Testis (tissue), 5 donors: ENCODE measurements at regions of chr12 and their contacts with region 1.

Region 1: GRCh38 chr12:46473634-46474329 is 101.2 kb upstream of the SLC38A2 start:
- DNase-seq: peak; percentile 59
- H3K4me3 ChIP-seq: no peak overlapping the region
- H3K27ac ChIP-seq: peak overlapping the region; percentile 55 to 70
- H3K4me1 ChIP-seq: peaks cover 14% of the 10 kb centered on the region
- H3K27me3 ChIP-seq: no peaks in the 10 kb centered on the region
- CTCF ChIP-seq: no peak
- POLR2A ChIP-seq: no peak

Region 2: GRCh38 chr12:46382964-46383653 is 90.7 kb before region 1 on chr12:
- intact Hi-C with region 1: loop called (anchors 10 kb)
- DNase-seq: peak; percentile 96
- H3K4me3 ChIP-seq: peak overlapping the region; percentile 76 to 86
- H3K27ac ChIP-seq: peak overlapping the region; percentile 98 to 99
- H3K4me1 ChIP-seq: peaks cover 29% of the 10 kb centered on the region
- H3K27me3 ChIP-seq: no peaks in the 10 kb centered on the region
- CTCF ChIP-seq: peak; percentile 14 to 28 (median 24)
- POLR2A ChIP-seq: peak; percentile 83